ENCODE measurements at regions of chr13 and their contacts with region 1.

Region 1: GRCh38 chr13:41905600-41906254 is 55.2 kb downstream of the VWA8 start:
- DNase-seq: no peak
- H3K4me3 ChIP-seq: no peak overlapping the region
- H3K27ac ChIP-seq: no peak overlapping the region
- H3K4me1 ChIP-seq: no peaks in the 10 kb centered on the region
- H3K27me3 ChIP-seq: no peaks in the 10 kb centered on the region
- CTCF ChIP-seq: peak; percentile 19 to 51 (median 48)

Region 2: DNA sequence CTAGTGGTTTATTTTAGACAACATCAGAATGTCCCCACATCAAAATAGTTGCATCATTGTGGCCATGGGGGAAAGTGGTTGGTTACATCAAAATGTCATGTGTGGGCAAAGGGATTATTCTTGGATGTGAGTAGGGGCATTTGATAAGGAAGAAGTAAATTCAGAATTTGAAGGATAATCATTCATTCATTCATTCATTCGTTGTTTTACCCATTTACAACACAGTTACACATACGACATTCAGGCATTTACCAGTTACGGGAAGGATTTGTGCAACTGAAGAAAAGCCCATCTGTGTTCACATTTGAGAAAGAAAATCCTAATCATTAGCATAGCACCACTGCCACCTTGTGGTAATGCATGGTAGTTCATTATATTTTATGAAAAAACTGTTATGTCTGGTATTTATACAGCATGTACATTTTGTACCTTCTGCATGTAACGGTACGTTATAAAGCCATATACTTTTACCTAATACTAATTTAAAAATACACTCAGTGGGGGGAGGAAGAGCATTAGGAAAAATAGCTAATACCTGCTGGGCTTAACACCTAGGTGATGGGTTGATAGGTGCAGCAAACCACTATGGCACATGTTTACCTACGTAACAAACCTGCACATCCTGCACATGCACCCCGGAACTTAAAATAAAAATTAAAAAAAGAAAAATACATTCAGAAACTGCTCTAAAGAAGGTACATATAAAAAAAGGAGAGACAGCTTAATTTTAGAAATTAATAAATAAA is 204.9 kb after region 1 on chr13:
- intact Hi-C with region 1: loop called (anchors 2 kb)
- DNase-seq: no peak
- H3K4me3 ChIP-seq: no peak overlapping the region
- H3K27ac ChIP-seq: no peak overlapping the region
- H3K4me1 ChIP-seq: peaks cover 0 to 6% of the 10 kb centered on the region in 2 donors
- H3K27me3 ChIP-seq: no peaks in the 10 kb centered on the region
- CTCF ChIP-seq: peak; percentile 65 to 79 (median 75)

Measured in ascending aorta (tissue), 2 donors.